Activated CD8-positive, alpha-beta T cell treated with anti-CD3 and anti-CD28 coated beads for 36 hours (primary cell): ENCODE measurements at regions of chr2 and their contacts with region 1.

Region 1: GRCh38 chr2:172442072-172442895 is 14.9 kb downstream of the ITGA6 start:
- DNase-seq: peak; percentile 80
- ATAC-seq: peak; percentile 54
- H3K4me3 Mint-ChIP-seq: peak overlapping the region; percentile 44
- H3K27ac Mint-ChIP-seq: peak overlapping the region; percentile 62
- H3K4me1 Mint-ChIP-seq: peaks cover 58% of the 10 kb centered on the region
- H3K27me3 Mint-ChIP-seq: no peaks in the 10 kb centered on the region
- CTCF ChIP-seq: no peak

Region 2: DNA sequence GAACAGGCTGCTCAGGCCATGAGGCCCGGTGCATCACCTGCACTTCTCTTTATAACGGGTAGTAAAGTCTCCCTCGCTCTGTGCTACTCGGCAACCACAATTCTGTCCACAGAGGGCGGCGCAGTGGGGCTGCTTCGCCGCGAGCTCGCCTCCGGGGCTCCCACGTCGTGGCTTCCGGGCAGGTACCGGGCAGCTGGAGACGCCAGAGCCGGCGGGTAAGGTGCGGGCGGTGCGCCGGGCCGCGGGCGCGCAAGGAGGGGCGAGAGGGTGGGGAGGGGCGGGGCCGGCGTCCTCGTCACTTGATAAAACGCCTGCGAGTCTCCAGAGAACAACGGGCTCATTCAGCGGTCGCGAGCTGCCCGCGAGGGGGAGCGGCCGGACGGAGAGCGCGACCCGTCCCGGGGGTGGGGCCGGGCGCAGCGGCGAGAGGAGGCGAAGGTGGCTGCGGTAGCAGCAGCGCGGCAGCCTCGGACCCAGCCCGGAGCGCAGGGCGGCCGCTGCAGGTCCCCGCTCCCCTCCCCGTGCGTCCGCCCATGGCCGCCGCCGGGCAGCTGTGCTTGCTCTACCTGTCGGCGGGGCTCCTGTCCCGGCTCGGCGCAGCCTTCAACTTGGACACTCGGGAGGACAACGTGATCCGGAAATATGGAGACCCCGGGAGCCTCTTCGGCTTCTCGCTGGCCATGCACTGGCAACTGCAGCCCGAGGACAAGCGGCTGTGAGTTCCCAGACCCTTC is 14.9 kb before region 1 on chr2 and contains the start of gene ITGA6:
- CTCF ChIA-PET with region 1: interaction called, 85 read pairs
- POLR2A ChIA-PET with region 1: interaction called, 43 read pairs
- intact Hi-C with region 1: no loop called
- DNase-seq: peak; percentile 77
- ATAC-seq: peak; percentile 71
- H3K4me3 Mint-ChIP-seq: peak within 1 kb of the TSS; percentile 76
- H3K27ac Mint-ChIP-seq: peak within 1 kb of the TSS; percentile 76
- H3K4me1 Mint-ChIP-seq: peaks cover 57% of the 10 kb centered on the region
- H3K27me3 Mint-ChIP-seq: peaks cover 4% of the 10 kb centered on the region
- CTCF ChIP-seq: peak; percentile 37
- total RNA-seq, gene ITGA6: 7.9 to 8.4 TPM

Region 3: GRCh38 chr2:172452845-172453244 is 10.6 kb after region 1 on chr2:
- CTCF ChIA-PET with region 1: interaction called, 746 read pairs
- POLR2A ChIA-PET with region 1: interaction called, 7 read pairs
- intact Hi-C with region 1: no loop called
- DNase-seq: no peak
- ATAC-seq: no peak
- H3K4me3 Mint-ChIP-seq: no peak overlapping the region
- H3K27ac Mint-ChIP-seq: no peak overlapping the region
- H3K4me1 Mint-ChIP-seq: peaks cover 72% of the 10 kb centered on the region
- H3K27me3 Mint-ChIP-seq: no peaks in the 10 kb centered on the region
- CTCF ChIP-seq: no peak